Panc1 (cell line): ENCODE measurements at regions of chr1 and their contacts with region 1.

Region 1: GRCh38 chr1:89681045-89681729 is 48.3 kb downstream of the LRRC8C start:
- DNase-seq: no peak
- ATAC-seq: no peak
- H3K4me3 ChIP-seq: no peak overlapping the region
- H3K27ac ChIP-seq: no peak overlapping the region
- H3K4me1 ChIP-seq: no peaks in the 10 kb centered on the region
- H3K27me3 ChIP-seq: no peaks in the 10 kb centered on the region
- CTCF ChIP-seq: no peak

Region 2: GRCh38 chr1:89391686-89392085 is 289.5 kb before region 1 on chr1:
- CTCF ChIA-PET with region 1: no interaction called
- POLR2A ChIA-PET with region 1: no interaction called
- in situ Hi-C with region 1: no loop called
- intact Hi-C with region 1: no loop called
- DNase-seq: no peak
- ATAC-seq: no peak
- H3K4me3 ChIP-seq: no peak overlapping the region
- H3K27ac ChIP-seq: no peak overlapping the region
- H3K4me1 ChIP-seq: no peaks in the 10 kb centered on the region
- H3K27me3 ChIP-seq: no peaks in the 10 kb centered on the region
- CTCF ChIP-seq: no peak

Region 3: GRCh38 chr1:89556726-89557444 is 124.3 kb before region 1 on chr1:
- CTCF ChIA-PET with region 1: no interaction called
- POLR2A ChIA-PET with region 1: no interaction called
- in situ Hi-C with region 1: no loop called
- intact Hi-C with region 1: no loop called
- DNase-seq: no peak
- ATAC-seq: no peak
- H3K4me3 ChIP-seq: no peak overlapping the region
- H3K27ac ChIP-seq: no peak overlapping the region
- H3K4me1 ChIP-seq: no peaks in the 10 kb centered on the region
- H3K27me3 ChIP-seq: no peaks in the 10 kb centered on the region
- CTCF ChIP-seq: no peak

Region 4: GRCh38 chr1:89670163-89670562 is 11.0 kb before region 1 on chr1:
- CTCF ChIA-PET with region 1: no interaction called
- POLR2A ChIA-PET with region 1: interaction called, 16 read pairs
- in situ Hi-C with region 1: no loop called
- intact Hi-C with region 1: no loop called
- DNase-seq: no peak
- ATAC-seq: no peak
- H3K4me3 ChIP-seq: no peak overlapping the region
- H3K27ac ChIP-seq: no peak overlapping the region
- H3K4me1 ChIP-seq: no peaks in the 10 kb centered on the region
- H3K27me3 ChIP-seq: no peaks in the 10 kb centered on the region
- CTCF ChIP-seq: no peak

Region 5: GRCh38 chr1:89987170-89987819 is 306.1 kb after region 1 on chr1:
- CTCF ChIA-PET with region 1: no interaction called
- POLR2A ChIA-PET with region 1: no interaction called
- in situ Hi-C with region 1: no loop called
- intact Hi-C with region 1: no loop called
- DNase-seq: peak; percentile 78
- ATAC-seq: peak; percentile 95
- H3K4me3 ChIP-seq: no peak overlapping the region
- H3K27ac ChIP-seq: no peak overlapping the region
- H3K4me1 ChIP-seq: no peaks in the 10 kb centered on the region
- H3K27me3 ChIP-seq: no peaks in the 10 kb centered on the region
- CTCF ChIP-seq: peak; percentile 83